ENCODE measurements at regions of chrX and their contacts with region 1.

Region 1: GRCh38 chrX:119468930-119469635 is 839 bp downstream of the SLC25A5 start:
- DNase-seq: peak; percentile 79 to 89
- H3K4me3 ChIP-seq: peak overlapping the region; percentile 91
- H3K4me3 Mint-ChIP-seq: peak overlapping the region; percentile 93
- H3K27ac Mint-ChIP-seq: peak overlapping the region; percentile 94
- H3K4me1 ChIP-seq: no peaks in the 10 kb centered on the region; the same call in 1 of the 2 replicates
- H3K4me1 Mint-ChIP-seq: no peaks in the 10 kb centered on the region
- H3K27me3 ChIP-seq: no peaks in the 10 kb centered on the region
- H3K27me3 Mint-ChIP-seq: no peaks in the 10 kb centered on the region
- CTCF ChIP-seq: peak; percentile 47 to 65

Region 2: DNA sequence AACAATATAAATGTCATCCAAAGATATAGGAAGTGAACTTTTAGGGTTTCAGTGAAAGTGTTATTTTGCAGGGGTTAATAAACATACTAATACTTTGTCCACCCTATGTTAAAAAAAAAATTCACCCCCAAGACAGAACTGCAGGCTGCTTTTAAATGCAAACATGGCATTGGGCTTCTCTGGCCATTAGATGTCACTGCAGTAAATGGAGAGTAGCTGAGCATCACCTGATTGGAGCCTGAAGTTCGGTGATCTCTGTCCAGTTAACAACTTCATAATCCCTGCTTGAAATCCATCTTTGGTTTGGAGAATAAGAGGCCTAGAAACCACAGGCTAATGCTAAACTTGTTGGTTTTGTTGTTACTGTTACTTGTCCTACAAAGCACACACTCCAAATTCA is 51.2 kb before region 1 on chrX:
- CTCF ChIA-PET with region 1: no interaction called
- POLR2A ChIA-PET with region 1: no interaction called
- intact Hi-C with region 1: loop called (anchors 1 kb)
- DNase-seq: peak in 1 of 2 experiments; percentile 11
- H3K4me3 ChIP-seq: no peak overlapping the region
- H3K4me3 Mint-ChIP-seq: no peak overlapping the region
- H3K27ac Mint-ChIP-seq: no peak overlapping the region
- H3K4me1 ChIP-seq: peaks cover 12% of the 10 kb centered on the region; the same call in 1 of the 2 replicates
- H3K4me1 Mint-ChIP-seq: peaks cover 14% of the 10 kb centered on the region
- H3K27me3 ChIP-seq: no peaks in the 10 kb centered on the region
- H3K27me3 Mint-ChIP-seq: no peaks in the 10 kb centered on the region
- CTCF ChIP-seq: peak in 1 of 2 experiments; percentile 44

Region 3: DNA sequence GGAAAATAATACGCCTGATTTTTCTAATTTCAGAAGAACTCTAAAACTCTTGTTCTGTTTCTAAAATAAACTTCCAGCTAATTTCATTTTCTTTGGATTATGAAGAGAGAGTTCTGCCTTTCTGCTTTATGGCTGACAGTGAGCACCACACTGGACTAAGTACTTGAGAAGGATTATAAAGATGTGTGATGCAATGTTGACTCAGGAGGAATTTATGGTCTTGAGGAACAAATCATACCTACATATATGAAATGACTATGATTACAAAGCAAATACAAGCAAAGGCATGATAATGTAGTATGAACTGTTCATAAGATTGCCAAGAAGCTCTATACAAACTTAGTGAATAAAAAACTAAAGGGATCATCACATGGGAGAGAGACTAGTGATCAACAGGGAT is 13.8 kb before region 1 on chrX:
- CTCF ChIA-PET with region 1: no interaction called
- POLR2A ChIA-PET with region 1: interaction called, 4 read pairs
- intact Hi-C with region 1: loop called (anchors 2 kb)
- DNase-seq: peak in 1 of 2 experiments; percentile 20
- H3K4me3 ChIP-seq: no peak overlapping the region
- H3K4me3 Mint-ChIP-seq: peak overlapping the region; percentile 54
- H3K27ac Mint-ChIP-seq: peak overlapping the region; percentile 60
- H3K4me1 ChIP-seq: peaks cover 13% of the 10 kb centered on the region
- H3K4me1 Mint-ChIP-seq: peaks cover 17% of the 10 kb centered on the region
- H3K27me3 ChIP-seq: no peaks in the 10 kb centered on the region
- H3K27me3 Mint-ChIP-seq: no peaks in the 10 kb centered on the region
- CTCF ChIP-seq: no peak

Region 4: GRCh38 chrX:119488749-119489148 is 19.7 kb after region 1 on chrX:
- CTCF ChIA-PET with region 1: interaction called, 11 read pairs
- POLR2A ChIA-PET with region 1: no interaction called
- intact Hi-C with region 1: no loop called
- DNase-seq: peak; percentile 53
- H3K4me3 ChIP-seq: no peak overlapping the region
- H3K4me3 Mint-ChIP-seq: no peak overlapping the region
- H3K27ac Mint-ChIP-seq: no peak overlapping the region
- H3K4me1 ChIP-seq: no peaks in the 10 kb centered on the region
- H3K4me1 Mint-ChIP-seq: no peaks in the 10 kb centered on the region
- H3K27me3 ChIP-seq: no peaks in the 10 kb centered on the region
- H3K27me3 Mint-ChIP-seq: no peaks in the 10 kb centered on the region
- CTCF ChIP-seq: peak; percentile 40 to 55

Region 5: GRCh38 chrX:119753571-119754257 is 284.6 kb after region 1 on chrX:
- CTCF ChIA-PET with region 1: no interaction called
- POLR2A ChIA-PET with region 1: no interaction called
- intact Hi-C with region 1: no loop called
- DNase-seq: peak in 1 of 2 experiments; percentile 19
- H3K4me3 ChIP-seq: no peak overlapping the region
- H3K4me3 Mint-ChIP-seq: no peak overlapping the region
- H3K27ac Mint-ChIP-seq: no peak overlapping the region
- H3K4me1 ChIP-seq: no peaks in the 10 kb centered on the region
- H3K4me1 Mint-ChIP-seq: peaks cover 13% of the 10 kb centered on the region
- H3K27me3 ChIP-seq: no peaks in the 10 kb centered on the region
- H3K27me3 Mint-ChIP-seq: no peaks in the 10 kb centered on the region
- CTCF ChIP-seq: peak in 1 of 2 experiments; percentile 3